ENCODE measurements at regions of chr18 and their contacts with region 1.

Region 1: GRCh38 chr18:22385718-22386117 is 32.0 kb downstream of the CTAGE1 start:
- DNase-seq: peak; percentile 82
- H3K4me3 ChIP-seq: no peak overlapping the region
- H3K27ac ChIP-seq: peak overlapping the region; percentile 55
- H3K4me1 ChIP-seq: peaks cover 5% of the 10 kb centered on the region
- H3K27me3 ChIP-seq: no peaks in the 10 kb centered on the region
- CTCF ChIP-seq: no peak

Region 2: DNA sequence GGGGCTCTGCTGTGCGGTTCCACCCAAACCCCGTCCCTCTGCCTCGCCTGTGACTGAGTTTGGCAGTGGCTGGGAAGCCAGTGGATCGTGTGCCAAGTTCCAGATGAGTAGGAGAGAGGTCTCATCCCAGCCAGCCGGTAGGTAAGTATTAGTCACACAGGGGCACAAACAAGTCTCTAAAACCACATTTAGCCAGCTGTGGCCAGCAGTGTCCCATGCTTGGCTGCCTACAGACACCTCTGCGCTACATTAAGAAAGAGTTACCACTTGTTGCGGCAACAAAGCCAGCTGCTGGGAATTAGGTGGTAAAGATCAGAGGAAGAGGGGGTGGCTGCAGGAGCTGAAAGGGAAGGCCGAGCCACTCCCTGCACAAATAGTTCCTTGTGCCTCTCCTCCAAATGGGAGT is 135.1 kb before region 1 on chr18:
- CTCF ChIA-PET with region 1: no interaction called
- dilution Hi-C with region 1: no loop called
- in situ Hi-C with region 1: no loop called
- intact Hi-C with region 1: no loop called
- DNase-seq: peak; percentile 88
- H3K4me3 ChIP-seq: no peak overlapping the region
- H3K27ac ChIP-seq: no peak overlapping the region
- H3K4me1 ChIP-seq: peaks cover 11% of the 10 kb centered on the region
- H3K27me3 ChIP-seq: peaks cover 19% of the 10 kb centered on the region
- CTCF ChIP-seq: no peak

Region 3: DNA sequence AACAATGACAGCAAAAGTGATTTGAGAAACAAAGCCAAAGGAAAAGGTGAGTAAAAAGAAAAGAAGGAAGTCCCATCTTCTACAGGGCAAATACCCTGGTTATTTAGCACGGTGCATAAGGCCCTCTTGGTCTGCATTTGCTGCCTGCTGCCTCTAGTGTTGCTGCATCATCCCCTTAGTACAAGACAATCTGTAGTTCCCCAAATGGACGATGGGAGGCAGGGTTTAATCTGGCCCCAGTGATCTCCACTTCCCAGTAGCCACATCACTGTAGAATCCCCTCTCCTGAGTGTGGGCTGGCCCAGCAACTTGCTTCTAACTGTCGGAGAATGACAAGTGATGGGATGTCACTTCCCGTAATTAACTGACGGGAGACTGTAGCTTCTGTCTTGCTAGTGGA is 53.1 kb before region 1 on chr18:
- CTCF ChIA-PET with region 1: no interaction called
- dilution Hi-C with region 1: no loop called
- in situ Hi-C with region 1: loop called in 1 of 2 experiments (anchors 10 kb)
- intact Hi-C with region 1: no loop called
- DNase-seq: peak; percentile 14
- H3K4me3 ChIP-seq: no peak overlapping the region
- H3K27ac ChIP-seq: no peak overlapping the region
- H3K4me1 ChIP-seq: no peaks in the 10 kb centered on the region
- H3K27me3 ChIP-seq: no peaks in the 10 kb centered on the region
- CTCF ChIP-seq: peak; percentile 18 to 34